ENCODE measurements at regions of chr5 and their contacts with region 1.

Region 1: GRCh38 chr5:43484106-43484849 is 613 bp upstream of the TMEM267 start:
- DNase-seq: peak; percentile 14 to 85
- H3K4me3 ChIP-seq: peak overlapping the region; percentile 69 to 97
- H3K27ac ChIP-seq: peak overlapping the region; percentile 98 to 99
- H3K4me1 ChIP-seq: peaks cover 0 to 7% of the 10 kb centered on the region in 2 donors
- H3K27me3 ChIP-seq: no peaks in the 10 kb centered on the region
- CTCF ChIP-seq: peak; percentile 54 to 79 (median 67)

Region 2: GRCh38 chr5:42970636-42971559 is 513.4 kb before region 1 on chr5:
- intact Hi-C with region 1: no loop called
- DNase-seq: no peak
- H3K4me3 ChIP-seq: no peak overlapping the region
- H3K27ac ChIP-seq: no peak overlapping the region
- H3K4me1 ChIP-seq: no peaks in the 10 kb centered on the region
- H3K27me3 ChIP-seq: no peaks in the 10 kb centered on the region
- CTCF ChIP-seq: no peak

Region 3: GRCh38 chr5:43120720-43121564 is 363.3 kb before region 1 on chr5 and contains the start of gene ZNF131:
- intact Hi-C with region 1: loop called (anchors 1 kb)
- DNase-seq: peak; percentile 84 to 98
- H3K4me3 ChIP-seq: peak within 1 kb of the TSS; percentile 85 to 87
- H3K27ac ChIP-seq: peak within 1 kb of the TSS; percentile 90 to 99
- H3K4me1 ChIP-seq: peaks cover 0 to 20% of the 10 kb centered on the region in 2 donors
- H3K27me3 ChIP-seq: no peaks in the 10 kb centered on the region
- CTCF ChIP-seq: peak in 1 of 3 experiments; percentile 19
- total RNA-seq, gene ZNF131: 61.2 TPM

Region 4: GRCh38 chr5:43396762-43397304 is 87.4 kb before region 1 on chr5:
- intact Hi-C with region 1: loop called (anchors 5 kb)
- DNase-seq: peak in 1 of 2 donors; percentile 64
- H3K4me3 ChIP-seq: peak overlapping the region; percentile 55 to 67
- H3K27ac ChIP-seq: no peak overlapping the region
- H3K4me1 ChIP-seq: no peaks in the 10 kb centered on the region
- H3K27me3 ChIP-seq: no peaks in the 10 kb centered on the region
- CTCF ChIP-seq: no peak

Region 5: DNA sequence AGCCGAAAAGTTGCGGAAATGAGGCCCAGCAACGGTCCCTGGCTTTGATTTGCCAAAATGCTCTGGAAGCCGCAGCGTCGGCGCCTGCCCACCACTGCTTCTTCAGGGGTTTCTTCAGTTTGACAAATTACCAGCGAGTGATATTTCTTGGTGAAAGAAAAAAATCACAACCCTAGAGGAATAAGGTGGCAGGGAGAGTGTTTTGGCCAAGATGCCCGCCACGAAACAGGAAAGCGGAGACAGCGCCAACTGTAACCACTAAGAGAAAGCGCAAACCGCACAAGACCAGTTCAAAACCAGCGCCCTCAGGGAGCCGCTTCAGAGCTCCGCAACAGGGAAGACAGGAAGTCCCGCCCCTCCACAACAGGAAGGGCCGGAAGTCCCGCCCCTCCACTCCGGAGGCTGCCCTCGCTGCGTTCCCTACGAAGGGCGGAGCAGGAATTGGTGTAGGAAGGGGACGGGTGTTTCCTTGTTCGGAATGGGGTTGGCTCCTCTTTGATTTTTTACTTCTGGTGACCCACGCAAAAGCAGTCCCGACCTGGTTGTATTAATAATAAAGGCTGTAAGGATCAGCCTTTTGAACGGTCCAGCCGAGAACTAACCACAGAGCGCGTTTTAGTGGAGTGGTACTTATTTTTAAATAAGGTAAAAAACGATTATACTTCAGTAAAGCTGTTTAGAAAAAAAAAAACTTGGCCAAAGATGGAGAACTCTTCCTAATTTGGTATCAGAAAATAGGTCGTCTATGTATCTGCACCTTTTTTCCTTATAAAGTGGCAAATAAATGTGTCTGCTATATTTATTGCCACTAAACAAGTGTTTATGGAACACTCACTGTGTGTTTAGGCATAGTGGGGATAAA is 30.8 kb after region 1 on chr5 and contains the start of gene C5orf34:
- intact Hi-C with region 1: loop called (anchors 1 kb)
- DNase-seq: peak; percentile 89 to 98
- H3K4me3 ChIP-seq: peak within 1 kb of the TSS; percentile 39 to 87
- H3K27ac ChIP-seq: peak within 1 kb of the TSS; percentile 84 to 88
- H3K4me1 ChIP-seq: peaks cover 0 to 3% of the 10 kb centered on the region in 2 donors
- H3K27me3 ChIP-seq: no peaks in the 10 kb centered on the region
- CTCF ChIP-seq: no peak
- total RNA-seq, gene C5orf34: not detected

Region 6: GRCh38 chr5:43556857-43557542 is 72.7 kb after region 1 on chr5 and contains the start of gene PAIP1:
- intact Hi-C with region 1: loop called (anchors 5 kb)
- DNase-seq: peak; percentile 9 to 88
- H3K4me3 ChIP-seq: peak within 1 kb of the TSS; percentile 79 to 90
- H3K27ac ChIP-seq: peak within 1 kb of the TSS; percentile 96
- H3K4me1 ChIP-seq: peaks cover 2 to 25% of the 10 kb centered on the region in 2 donors
- H3K27me3 ChIP-seq: no peaks in the 10 kb centered on the region
- CTCF ChIP-seq: peak in 2 of 3 experiments; percentile 48 to 65
- total RNA-seq, gene PAIP1: 93.6 TPM

Region 7: DNA sequence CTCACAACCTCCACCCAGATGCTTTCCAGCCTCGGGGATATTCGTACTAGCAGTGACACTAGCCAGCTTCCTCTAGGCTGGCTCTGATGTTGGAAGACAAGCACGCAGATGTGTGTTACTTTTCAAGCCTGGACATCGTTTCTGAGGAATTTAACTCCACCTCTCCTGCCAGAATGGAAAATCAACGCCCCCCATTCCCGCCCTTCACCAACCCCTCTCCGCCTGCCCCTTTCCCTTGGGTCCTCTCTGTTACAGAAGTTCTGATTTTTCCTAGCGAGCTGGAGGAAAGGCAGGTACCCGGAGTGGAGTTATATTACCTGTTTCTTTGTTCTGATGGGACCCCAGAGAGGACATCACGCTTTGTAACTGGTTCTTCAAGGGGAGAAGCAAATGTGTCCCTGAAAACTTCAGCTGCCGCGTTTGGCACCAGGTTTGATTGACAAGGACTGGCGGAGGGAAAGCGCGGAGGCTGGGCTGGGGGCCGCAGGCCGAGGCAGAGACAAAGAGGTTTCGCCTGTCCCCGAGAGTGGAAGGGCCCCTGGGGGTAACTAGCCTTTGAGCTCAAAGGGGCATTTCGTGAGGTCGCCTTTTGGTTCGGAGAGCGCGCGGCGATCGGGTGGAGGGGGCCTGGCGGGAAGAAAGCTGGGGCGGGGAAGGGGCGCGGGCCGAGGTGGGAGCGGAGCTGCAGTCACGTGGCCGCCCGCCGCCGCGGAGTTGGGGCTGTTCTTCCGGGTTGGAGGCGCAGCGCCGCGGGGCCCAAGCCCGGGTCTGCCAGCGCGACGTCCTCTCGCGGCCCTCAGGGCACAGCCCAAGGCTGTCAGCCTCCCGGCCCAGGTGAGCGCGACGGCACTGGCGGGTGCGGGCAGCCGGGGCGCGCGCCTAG is 118.4 kb after region 1 on chr5 and contains the start of gene NNT:
- intact Hi-C with region 1: loop called (anchors 1 kb)
- DNase-seq: peak; percentile 12 to 87
- H3K4me3 ChIP-seq: peak within 1 kb of the TSS; percentile 82 to 97
- H3K27ac ChIP-seq: peak within 1 kb of the TSS; percentile 86 to 95
- H3K4me1 ChIP-seq: peaks cover 2 to 9% of the 10 kb centered on the region in 2 donors
- H3K27me3 ChIP-seq: no peaks in the 10 kb centered on the region
- CTCF ChIP-seq: no peak
- total RNA-seq, gene NNT: 13.3 TPM

Region 8: GRCh38 chr5:44808435-44809214 is 1324.3 kb after region 1 on chr5 and contains the start of gene MRPS30:
- intact Hi-C with region 1: loop called (anchors 5 kb)
- DNase-seq: peak; percentile 78 to 97
- H3K4me3 ChIP-seq: peak within 1 kb of the TSS; percentile 66 to 79
- H3K27ac ChIP-seq: peak within 1 kb of the TSS; percentile 62 to 81
- H3K4me1 ChIP-seq: peaks cover 2 to 8% of the 10 kb centered on the region in 2 donors
- H3K27me3 ChIP-seq: no peaks in the 10 kb centered on the region
- CTCF ChIP-seq: peak in 2 of 3 experiments; percentile 18 to 43
- total RNA-seq, gene MRPS30: 39.9 TPM

Measured in ascending aorta (tissue), 2 donors.